CD14-positive monocyte (primary cell): ENCODE measurements at regions of chr12 and their contacts with region 1.

Region 1: GRCh38 chr12:131226345-131227265 is 272.9 kb downstream of the ADGRD1 start:
- DNase-seq: no peak
- H3K4me3 ChIP-seq: no peak overlapping the region
- H3K4me3 Mint-ChIP-seq: no peak overlapping the region
- H3K27ac ChIP-seq: no peak overlapping the region
- H3K27ac Mint-ChIP-seq: no peak overlapping the region
- H3K4me1 ChIP-seq: peaks cover 13 to 20% of the 10 kb centered on the region in 2 donors
- H3K4me1 Mint-ChIP-seq: peaks cover 31% of the 10 kb centered on the region
- H3K27me3 ChIP-seq: peaks cover 9 to 36% of the 10 kb centered on the region in 2 donors
- H3K27me3 Mint-ChIP-seq: peaks cover 36 to 43% (median 37%) of the 10 kb centered on the region in 3 donors
- CTCF ChIP-seq: no peak

Region 2: DNA sequence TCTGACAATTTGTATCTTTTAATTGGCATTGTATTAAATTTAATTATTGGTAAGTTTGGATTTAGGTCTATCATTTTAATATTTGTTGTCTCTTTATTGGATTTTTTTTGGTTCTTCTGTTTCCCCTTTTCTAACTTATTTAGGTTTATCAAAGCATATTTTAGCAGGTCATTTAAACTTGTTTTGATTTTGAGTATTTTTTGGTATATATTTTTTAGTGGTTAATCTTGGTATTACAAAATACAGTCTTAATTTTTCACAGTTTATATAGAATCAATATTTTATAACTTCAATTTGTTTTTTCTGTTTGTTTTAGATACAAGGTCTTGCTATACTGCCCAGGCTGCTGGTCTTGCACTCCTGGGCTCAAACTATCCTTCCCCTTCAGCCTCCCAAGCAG is 288.4 kb before region 1 on chr12:
- intact Hi-C with region 1: no loop called
- DNase-seq: no peak
- H3K4me3 ChIP-seq: no peak overlapping the region
- H3K4me3 Mint-ChIP-seq: no peak overlapping the region
- H3K27ac ChIP-seq: no peak overlapping the region
- H3K27ac Mint-ChIP-seq: no peak overlapping the region
- H3K4me1 ChIP-seq: no peaks in the 10 kb centered on the region
- H3K4me1 Mint-ChIP-seq: peaks cover 2% of the 10 kb centered on the region
- H3K27me3 ChIP-seq: peaks cover 0 to 6% of the 10 kb centered on the region in 2 donors
- H3K27me3 Mint-ChIP-seq: peaks cover 5 to 21% (median 12%) of the 10 kb centered on the region in 3 donors
- CTCF ChIP-seq: no peak

Region 3: DNA sequence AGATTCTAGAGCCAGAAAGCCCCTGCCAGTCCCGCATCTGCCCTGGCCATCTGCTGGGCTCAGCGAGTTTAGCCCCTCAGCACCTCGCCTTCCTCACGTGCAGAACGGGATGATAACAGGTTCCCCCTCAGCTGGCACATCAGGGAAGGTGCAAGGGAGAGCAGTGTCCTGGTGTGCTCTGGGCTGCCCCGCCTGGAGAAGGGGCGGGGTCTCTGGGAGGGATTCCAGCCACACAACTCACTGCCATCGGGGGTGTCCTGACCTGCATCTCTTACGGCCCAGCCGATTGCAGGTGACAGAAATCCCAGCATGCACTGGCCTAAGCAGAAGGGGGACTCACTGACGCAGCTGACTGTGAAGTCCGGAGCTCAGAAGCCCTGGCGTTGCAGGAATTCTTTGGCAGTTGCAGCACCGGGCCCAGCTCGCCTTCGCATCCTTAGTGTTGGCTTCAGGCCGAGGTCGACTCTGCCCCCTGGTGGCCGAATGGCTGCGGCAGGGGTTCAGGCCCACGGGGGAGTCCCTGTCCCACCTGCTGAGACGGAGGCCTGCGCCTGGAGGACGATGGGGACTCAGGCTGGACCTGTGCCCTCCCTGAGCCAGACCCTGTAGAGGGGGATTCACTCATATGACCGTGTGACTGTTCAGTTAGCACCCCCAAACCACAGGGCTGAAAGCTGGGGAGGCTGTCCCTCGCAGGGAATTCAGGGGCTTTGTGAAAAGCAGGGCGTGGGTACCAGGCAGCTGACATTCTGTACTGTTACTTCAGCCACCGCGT is 94.3 kb before region 1 on chr12:
- intact Hi-C with region 1: no loop called
- DNase-seq: peak; percentile 25 to 44 (median 29)
- H3K4me3 ChIP-seq: no peak overlapping the region
- H3K4me3 Mint-ChIP-seq: no peak overlapping the region
- H3K27ac ChIP-seq: no peak overlapping the region
- H3K27ac Mint-ChIP-seq: peak overlapping the region in 1 of 7 donors; percentile 48
- H3K4me1 ChIP-seq: peaks cover 0 to 7% of the 10 kb centered on the region in 2 donors
- H3K4me1 Mint-ChIP-seq: peaks cover 13% of the 10 kb centered on the region
- H3K27me3 ChIP-seq: no peaks in the 10 kb centered on the region
- H3K27me3 Mint-ChIP-seq: peaks cover 0 to 5% (median 0%) of the 10 kb centered on the region in 3 donors
- CTCF ChIP-seq: peak; percentile 87

Region 4: DNA sequence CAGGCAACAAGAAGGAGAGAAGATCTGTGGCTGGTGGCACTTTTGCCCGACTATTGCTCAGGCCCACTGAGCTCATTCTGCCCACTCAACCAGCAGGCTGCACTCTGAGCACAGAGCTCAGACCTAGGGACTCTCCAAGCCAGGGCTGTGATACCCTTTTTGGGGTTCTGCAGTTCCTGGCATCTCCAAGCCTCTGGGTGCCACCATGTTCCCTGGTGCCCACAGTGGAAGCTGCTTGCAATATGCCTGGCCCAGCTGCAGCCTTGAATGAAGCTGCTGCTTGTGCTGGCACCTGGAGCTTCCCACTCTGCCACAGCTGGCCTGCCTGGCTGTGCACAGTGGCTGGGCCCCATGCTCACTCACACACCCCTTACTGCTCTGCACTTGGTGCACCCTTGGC is 36.8 kb before region 1 on chr12:
- intact Hi-C with region 1: no loop called
- DNase-seq: no peak
- H3K4me3 ChIP-seq: no peak overlapping the region
- H3K4me3 Mint-ChIP-seq: no peak overlapping the region
- H3K27ac ChIP-seq: no peak overlapping the region
- H3K27ac Mint-ChIP-seq: peak overlapping the region in 1 of 7 donors; percentile 54
- H3K4me1 ChIP-seq: no peaks in the 10 kb centered on the region
- H3K4me1 Mint-ChIP-seq: peaks cover 3% of the 10 kb centered on the region
- H3K27me3 ChIP-seq: no peaks in the 10 kb centered on the region
- H3K27me3 Mint-ChIP-seq: peaks cover 0 to 2% (median 0%) of the 10 kb centered on the region in 3 donors
- CTCF ChIP-seq: no peak

Region 5: GRCh38 chr12:131415781-131416180 is 189.2 kb after region 1 on chr12:
- intact Hi-C with region 1: no loop called
- DNase-seq: no peak
- H3K4me3 ChIP-seq: no peak overlapping the region
- H3K4me3 Mint-ChIP-seq: no peak overlapping the region
- H3K27ac ChIP-seq: no peak overlapping the region
- H3K27ac Mint-ChIP-seq: no peak overlapping the region
- H3K4me1 ChIP-seq: no peaks in the 10 kb centered on the region
- H3K4me1 Mint-ChIP-seq: peaks cover 3% of the 10 kb centered on the region
- H3K27me3 ChIP-seq: no peaks in the 10 kb centered on the region
- H3K27me3 Mint-ChIP-seq: peaks cover 0 to 6% (median 4%) of the 10 kb centered on the region in 3 donors
- CTCF ChIP-seq: no peak

Region 6: GRCh38 chr12:131438881-131439280 is 212.3 kb after region 1 on chr12:
- intact Hi-C with region 1: loop called in 1 of 2 experiments (anchors 2 kb)
- DNase-seq: no peak
- H3K4me3 ChIP-seq: no peak overlapping the region
- H3K4me3 Mint-ChIP-seq: no peak overlapping the region
- H3K27ac ChIP-seq: no peak overlapping the region
- H3K27ac Mint-ChIP-seq: no peak overlapping the region
- H3K4me1 ChIP-seq: no peaks in the 10 kb centered on the region
- H3K4me1 Mint-ChIP-seq: peaks cover 2% of the 10 kb centered on the region
- H3K27me3 ChIP-seq: peaks cover 4 to 11% of the 10 kb centered on the region in 2 donors
- H3K27me3 Mint-ChIP-seq: peaks cover 13 to 24% (median 14%) of the 10 kb centered on the region in 3 donors
- CTCF ChIP-seq: no peak